Tibial artery (tissue), 4 donors: ENCODE measurements at regions of chr14 and their contacts with region 1.

Region 1: DNA sequence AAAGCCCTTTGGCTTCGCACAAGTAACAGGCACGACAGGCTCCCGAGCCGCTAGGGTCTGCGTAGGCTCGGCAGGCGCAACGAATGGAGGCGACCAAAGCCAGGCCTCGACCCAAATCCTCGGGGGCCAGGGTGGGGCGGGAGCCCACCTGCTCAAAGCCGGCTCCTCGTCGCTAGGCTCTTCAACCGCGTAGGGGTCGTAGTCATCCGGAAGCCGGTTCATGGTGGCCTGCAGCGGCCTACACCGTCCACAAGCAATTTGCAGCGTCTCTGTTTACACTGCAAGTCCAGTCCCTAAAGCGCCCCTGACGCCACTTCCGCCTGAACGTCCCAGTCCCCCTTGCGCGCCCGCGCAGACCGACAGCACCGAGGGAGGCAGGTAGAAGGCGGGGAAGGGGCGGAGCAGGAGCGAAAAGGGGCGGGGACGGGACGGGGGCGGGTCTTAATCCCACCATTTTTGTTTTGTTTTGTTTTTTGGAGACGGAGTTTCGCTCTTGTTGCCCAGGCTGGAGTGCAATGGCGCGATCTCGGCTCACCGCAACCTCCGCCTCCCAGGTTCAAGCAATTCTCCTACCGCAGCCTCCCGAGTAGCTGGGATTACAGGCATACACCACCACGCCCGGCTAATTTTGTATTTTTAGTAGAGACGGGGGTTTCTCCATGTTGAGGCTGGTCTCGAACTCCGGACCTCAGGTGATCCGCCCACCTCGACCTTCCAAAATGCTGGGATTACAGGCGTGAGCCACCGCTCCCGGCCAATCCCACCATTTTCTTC is at the start of gene EAPP:
- DNase-seq: peak; percentile 99
- H3K4me3 ChIP-seq: peak within 1 kb of the TSS; percentile 69 to 88
- H3K27ac ChIP-seq: peak within 1 kb of the TSS; percentile 91 to 96
- H3K4me1 ChIP-seq: peaks cover 0 to 28% (median 18%) of the 10 kb centered on the region in 4 donors
- H3K27me3 ChIP-seq: no peaks in the 10 kb centered on the region
- CTCF ChIP-seq: peak in 1 of 2 experiments; percentile 25

Region 2: GRCh38 chr14:34461334-34462131 is 78.1 kb before region 1 on chr14:
- intact Hi-C with region 1: loop called (anchors 10 kb)
- DNase-seq: peak; percentile 63 to 77
- H3K4me3 ChIP-seq: peak overlapping the region; percentile 69 to 94
- H3K27ac ChIP-seq: peak overlapping the region; percentile 91 to 95
- H3K4me1 ChIP-seq: peaks cover 0 to 24% (median 11%) of the 10 kb centered on the region in 4 donors
- H3K27me3 ChIP-seq: no peaks in the 10 kb centered on the region
- CTCF ChIP-seq: no peak

Region 3: DNA sequence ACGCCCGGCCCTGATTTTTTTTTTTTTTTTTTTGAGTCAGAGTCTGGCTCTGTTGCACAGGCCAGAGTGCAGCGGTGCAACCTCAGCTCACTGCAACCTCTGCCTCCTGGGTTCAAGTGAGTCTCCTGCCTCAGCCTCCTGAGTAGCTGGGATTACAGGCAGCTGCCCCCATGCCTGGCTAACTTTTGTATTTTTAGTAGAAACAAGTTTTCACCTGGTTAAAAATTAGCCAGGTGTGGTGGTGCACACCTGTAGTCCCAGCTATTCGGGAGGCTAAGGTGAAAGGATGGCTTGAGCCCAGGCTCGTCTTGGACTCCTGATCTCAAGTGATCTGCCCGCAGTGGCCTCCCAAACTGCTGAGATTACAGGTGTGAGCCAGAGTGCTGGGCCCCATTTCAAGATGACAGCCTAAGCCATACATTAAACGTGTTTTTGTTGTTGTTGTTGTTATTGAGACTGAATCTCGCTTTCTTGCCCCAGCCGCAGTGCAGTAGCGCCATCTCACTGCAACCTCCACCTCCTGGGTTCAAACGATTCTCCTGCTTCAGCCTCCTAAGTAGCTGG is 42.6 kb after region 1 on chr14:
- intact Hi-C with region 1: no loop called
- DNase-seq: no peak
- H3K4me3 ChIP-seq: no peak overlapping the region
- H3K27ac ChIP-seq: no peak overlapping the region
- H3K4me1 ChIP-seq: no peaks in the 10 kb centered on the region
- H3K27me3 ChIP-seq: no peaks in the 10 kb centered on the region
- CTCF ChIP-seq: no peak

Region 4: DNA sequence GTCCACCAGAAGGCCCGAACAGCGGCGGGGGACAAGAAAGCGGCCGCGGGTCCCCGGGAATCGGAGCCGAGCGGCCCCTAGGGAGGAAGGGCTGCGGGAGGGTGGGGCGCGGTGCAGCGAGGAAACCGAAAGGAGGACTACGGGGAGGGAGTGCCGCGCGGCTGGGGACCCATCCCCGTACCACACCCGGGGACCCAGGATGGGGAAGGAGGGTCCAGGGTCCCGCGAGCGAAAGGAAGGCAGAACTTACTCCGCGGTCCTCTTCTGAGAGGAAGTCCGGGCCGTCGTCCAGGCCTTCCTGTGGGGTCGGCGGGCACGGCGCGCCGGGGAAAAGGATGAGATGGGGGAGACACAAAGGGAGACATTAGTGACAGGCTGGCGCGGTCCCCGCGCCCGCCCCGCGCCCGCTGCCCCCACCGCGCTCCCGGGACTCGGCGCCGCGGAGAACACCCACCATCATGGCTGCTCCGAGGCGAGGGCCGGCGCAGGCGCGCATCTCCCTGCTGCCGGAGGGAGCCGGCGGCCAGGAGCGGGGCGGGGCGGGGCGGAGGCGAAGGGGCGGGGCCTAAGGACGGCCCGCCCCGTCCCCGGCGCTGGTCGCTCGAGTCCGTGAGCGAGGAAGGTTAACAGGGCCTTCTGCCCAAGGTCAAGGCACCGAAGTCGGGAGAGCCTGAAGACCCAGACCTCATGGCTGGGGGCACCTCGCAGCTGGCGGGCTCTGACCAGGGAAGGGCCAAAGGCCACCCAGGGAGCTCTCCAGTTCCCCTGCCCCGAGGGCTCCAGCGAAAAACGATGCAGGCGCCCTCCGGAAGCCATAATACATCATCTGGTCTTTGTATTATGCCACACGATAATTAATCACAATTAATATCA is 90.3 kb after region 1 on chr14 and contains the start of gene SNX6:
- intact Hi-C with region 1: loop called (anchors 10 kb)
- DNase-seq: peak; percentile 84 to 91
- H3K4me3 ChIP-seq: peak within 1 kb of the TSS; percentile 67 to 97
- H3K27ac ChIP-seq: peak within 1 kb of the TSS; percentile 88 to 96
- H3K4me1 ChIP-seq: peaks cover 0 to 34% (median 11%) of the 10 kb centered on the region in 4 donors
- H3K27me3 ChIP-seq: no peaks in the 10 kb centered on the region
- CTCF ChIP-seq: no peak

Region 5: DNA sequence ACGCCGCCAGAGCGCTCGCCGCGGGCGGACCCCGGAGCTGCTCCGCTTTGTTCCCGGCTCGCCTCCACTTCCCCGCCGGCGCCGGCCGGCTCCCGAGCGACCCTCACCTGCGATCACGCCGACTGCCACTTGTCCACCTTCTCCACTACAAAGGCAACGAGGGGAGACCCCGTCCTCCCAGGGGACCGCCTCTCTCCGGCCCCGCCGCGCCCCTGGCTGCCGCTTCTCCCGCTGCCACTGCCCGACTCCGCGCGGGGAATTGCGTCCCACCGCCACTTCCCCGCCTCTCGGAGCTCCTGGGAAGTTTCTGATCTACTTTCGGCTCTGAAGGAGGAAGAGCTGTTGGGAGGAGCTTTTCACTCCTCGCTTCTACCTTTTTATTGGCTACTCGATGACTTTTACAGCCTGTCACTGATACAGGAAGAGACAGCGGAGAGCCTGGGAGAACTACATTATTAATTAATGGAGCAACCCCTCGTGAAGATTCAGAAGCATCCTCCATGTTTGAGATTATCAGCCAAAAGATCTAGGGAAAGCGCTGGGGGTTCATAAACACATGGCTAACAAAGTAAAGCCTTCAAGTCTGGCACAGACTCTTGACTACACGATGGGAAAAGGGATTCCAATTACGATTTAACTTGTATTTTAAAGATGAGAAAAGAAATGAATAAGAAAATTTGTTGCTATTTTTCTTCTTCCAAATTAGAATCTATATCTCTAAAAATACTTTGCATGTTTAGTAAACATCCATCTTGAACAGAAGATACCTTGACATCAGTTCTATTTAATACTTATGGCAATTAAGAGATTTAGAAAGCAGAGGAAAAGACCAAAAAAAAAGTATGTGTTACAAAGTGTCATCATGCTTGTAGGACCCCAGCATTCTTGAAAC is 335.7 kb after region 1 on chr14 and contains the start of gene BAZ1A:
- intact Hi-C with region 1: loop called (anchors 10 kb)
- DNase-seq: peak; percentile 57 to 82
- H3K4me3 ChIP-seq: peak within 1 kb of the TSS; percentile 72 to 92
- H3K27ac ChIP-seq: peak within 1 kb of the TSS; percentile 98 to 99
- H3K4me1 ChIP-seq: peaks cover 0 to 8% (median 3%) of the 10 kb centered on the region in 4 donors
- H3K27me3 ChIP-seq: no peaks in the 10 kb centered on the region
- CTCF ChIP-seq: peak; percentile 21 to 28